Transverse colon (tissue), 4 donors: ENCODE measurements at regions of chr4 and their contacts with region 1.

Region 1: GRCh38 chr4:179871718-179872117 is 2371.5 kb upstream of the TENM3 start:
- DNase-seq: no peak
- H3K4me3 ChIP-seq: no peak overlapping the region
- H3K27ac ChIP-seq: no peak overlapping the region
- H3K4me1 ChIP-seq: no peaks in the 10 kb centered on the region
- H3K27me3 ChIP-seq: no peaks in the 10 kb centered on the region
- CTCF ChIP-seq: no peak
- EP300 ChIP-seq: no peak
- POLR2A ChIP-seq: no peak

Region 2: GRCh38 chr4:178296669-178297068 is 1575.0 kb before region 1 on chr4:
- in situ Hi-C with region 1: no loop called
- intact Hi-C with region 1: loop called (anchors 10 kb)
- DNase-seq: no peak
- H3K4me3 ChIP-seq: no peak overlapping the region
- H3K27ac ChIP-seq: no peak overlapping the region
- H3K4me1 ChIP-seq: no peaks in the 10 kb centered on the region
- H3K27me3 ChIP-seq: no peaks in the 10 kb centered on the region
- CTCF ChIP-seq: no peak
- EP300 ChIP-seq: no peak
- POLR2A ChIP-seq: no peak